ENCODE measurements at regions of chr10 and their contacts with region 1.

Region 1: GRCh38 chr10:120735773-120736371 is 115.3 kb upstream of the WDR11 start:
- DNase-seq: no peak
- ATAC-seq: no peak

Region 2: DNA sequence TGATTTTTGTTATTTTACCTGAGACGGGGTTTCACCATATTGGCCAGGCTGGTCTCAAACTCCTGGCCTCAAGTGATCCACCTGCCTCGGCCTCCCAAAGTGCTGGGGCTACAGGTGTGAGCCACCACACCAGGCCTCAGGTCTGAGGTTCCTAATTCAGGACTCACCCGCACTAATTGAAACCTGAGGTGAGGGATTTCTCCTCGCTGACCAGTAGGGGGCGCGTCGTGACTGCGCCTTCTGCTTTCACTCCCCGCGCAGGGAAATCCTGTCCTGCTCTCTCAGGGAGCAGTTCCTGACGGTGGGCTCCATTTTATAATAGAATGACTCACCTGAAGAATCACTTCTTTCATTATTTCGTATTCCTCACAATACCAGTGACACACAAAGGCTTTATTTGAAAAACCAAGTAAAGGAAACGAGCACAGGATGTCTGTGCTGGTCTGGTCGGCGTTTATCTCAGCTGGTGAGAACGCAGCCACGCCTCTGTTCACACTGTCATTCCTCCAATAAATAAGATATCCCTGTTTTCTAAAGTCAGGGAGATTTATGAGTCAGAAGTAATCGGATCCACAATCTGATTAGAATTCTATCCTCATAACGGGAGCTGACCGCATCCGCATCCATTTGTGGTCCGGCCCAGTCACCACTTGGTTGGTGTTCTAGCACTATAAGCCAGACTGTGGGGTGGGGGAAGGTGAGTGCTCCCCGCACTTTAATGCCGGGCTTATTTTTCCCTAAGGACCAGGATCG is 1049.3 kb before region 1 on chr10:
- intact Hi-C with region 1: loop called (anchors 5 kb)
- DNase-seq: peak; percentile 78
- ATAC-seq: peak; percentile 94